BJ (cell line): ENCODE measurements at regions of chr9 and their contacts with region 1.

Region 1: GRCh38 chr9:22008736-22009562 is at the start of gene CDKN2B:
- DNase-seq: peak; percentile 87
- H3K4me3 ChIP-seq: peak within 1 kb of the TSS; percentile 94
- H3K27me3 ChIP-seq: no peaks in the 10 kb centered on the region
- CTCF ChIP-seq: peak; percentile 65
- polyA plus RNA-seq, gene CDKN2B: 4.3 and 5.2 TPM in 2 replicates

Region 2: DNA sequence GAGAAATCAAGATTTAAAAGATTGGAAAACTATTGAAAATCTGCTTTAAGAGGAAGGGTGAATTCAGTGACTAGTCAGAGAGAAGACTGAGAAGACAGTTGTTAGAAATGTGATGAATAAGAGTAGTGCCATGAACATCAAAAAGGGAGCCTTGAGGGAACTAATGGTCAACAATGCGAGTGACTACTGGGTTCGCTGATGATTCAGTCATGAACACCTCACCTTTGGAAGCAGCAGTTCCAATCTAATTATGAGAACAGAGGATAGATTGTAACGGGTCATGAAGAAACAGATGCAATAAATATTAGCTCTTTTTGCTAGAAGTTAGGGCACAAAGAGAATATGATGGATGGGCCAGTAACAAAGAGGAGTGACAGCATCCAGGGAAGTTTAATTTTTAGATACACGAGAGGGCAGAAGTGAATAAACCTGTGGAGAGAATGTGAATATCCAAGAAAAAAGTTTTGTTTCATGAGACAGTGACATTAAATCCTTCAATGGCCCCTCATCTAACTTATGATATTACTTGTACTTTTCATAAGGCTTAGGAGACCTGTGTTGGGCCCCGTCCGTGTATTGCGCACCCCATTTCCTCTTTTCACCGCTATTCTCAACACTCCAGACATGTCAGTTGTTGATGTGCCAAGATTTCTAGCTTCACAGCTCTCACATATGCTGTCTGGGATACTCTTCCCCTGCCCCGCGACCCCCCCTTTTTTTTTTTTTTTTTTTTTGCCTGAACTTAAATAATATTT is 503.3 kb before region 1 on chr9:
- CTCF ChIA-PET with region 1: no interaction called
- POLR2A ChIA-PET with region 1: no interaction called
- DNase-seq: no peak
- H3K4me3 ChIP-seq: no peak overlapping the region
- H3K27me3 ChIP-seq: no peaks in the 10 kb centered on the region
- CTCF ChIP-seq: no peak

Region 3: DNA sequence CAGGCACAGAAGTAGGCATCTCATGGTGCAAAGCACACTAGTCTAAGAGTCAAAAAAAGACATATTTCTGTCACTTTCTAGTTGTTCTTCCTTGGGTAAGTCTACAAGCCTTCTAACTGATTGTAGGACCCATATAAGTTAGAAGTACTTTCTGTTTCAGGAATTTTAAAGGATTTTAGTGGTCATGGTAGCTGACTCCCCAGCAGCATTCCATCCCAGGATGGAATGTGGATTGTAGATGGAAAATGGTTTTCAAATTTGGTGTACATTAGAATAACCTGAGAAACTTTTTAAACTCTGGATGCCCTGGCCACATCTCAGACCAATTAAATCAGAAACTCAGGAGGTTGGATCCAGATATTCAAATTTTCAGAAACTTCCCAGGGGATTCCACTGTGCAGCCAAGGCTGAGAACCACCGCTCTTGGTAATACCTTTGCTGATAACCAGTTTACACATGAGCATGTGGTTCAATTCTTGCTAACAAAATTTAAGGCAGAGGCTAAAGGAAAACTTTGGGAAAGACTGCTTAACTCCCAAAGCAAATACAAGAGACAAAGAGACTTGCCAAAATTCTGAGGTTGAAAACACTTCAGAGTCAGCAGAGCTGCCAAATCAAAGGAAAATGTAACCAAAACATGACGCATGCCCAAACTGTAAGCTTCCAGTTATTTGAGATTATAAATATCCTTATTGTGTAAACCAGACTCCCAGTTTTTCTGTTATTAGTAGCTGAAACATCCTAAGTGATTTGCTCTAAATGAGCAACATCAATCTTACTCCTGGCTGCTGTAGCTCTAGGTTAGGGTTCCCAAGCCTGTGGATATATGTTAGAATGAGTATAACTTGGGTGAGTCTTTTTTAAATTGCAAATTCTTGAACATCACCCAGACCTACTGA is 351.9 kb before region 1 on chr9:
- CTCF ChIA-PET with region 1: no interaction called
- POLR2A ChIA-PET with region 1: no interaction called
- DNase-seq: no peak
- H3K4me3 ChIP-seq: no peak overlapping the region
- H3K27me3 ChIP-seq: no peaks in the 10 kb centered on the region
- CTCF ChIP-seq: no peak

Region 4: DNA sequence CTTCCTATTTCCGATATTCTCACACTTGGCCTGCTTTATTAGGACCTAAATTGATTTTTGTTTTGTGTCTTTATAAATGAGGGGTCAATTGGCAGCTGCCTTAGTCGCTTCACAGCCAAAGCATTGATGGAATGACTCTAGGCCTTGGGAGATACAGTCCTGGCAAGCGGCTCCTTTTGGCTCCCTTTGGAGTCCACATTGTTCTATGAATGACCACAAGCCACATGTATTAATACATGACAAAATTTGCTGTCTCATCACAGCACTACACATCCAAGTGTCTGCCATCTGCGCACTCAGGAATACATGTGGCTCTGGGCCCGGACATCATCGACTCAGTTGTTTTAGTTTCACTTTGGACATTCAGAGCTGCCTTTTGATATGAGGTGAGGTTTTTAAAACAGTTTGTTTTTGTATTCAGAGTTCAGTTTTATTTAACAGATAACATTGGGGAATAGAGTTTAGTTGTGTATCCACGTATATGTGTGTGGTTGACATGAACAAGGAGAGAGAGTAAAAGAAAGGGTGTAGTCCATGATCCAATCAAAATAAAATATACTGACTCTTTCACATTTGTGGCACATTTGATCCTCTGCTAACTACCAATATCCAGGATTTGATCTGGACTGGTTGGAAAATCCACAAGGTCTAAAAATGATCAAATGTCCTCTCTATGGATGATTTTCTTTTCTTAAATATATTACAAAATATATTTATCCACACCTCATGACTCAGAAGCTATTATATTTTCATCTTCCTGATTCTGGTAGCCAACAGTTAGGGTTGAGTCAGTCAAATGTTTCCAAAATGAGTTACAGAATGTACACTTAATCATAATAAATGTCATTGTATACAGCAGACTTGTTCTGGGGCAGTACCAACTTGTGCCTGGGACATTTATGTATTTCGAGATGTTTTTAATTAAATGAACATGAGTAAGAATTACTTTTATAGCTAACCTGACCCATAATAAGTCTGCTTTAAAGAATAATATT is 320.5 kb before region 1 on chr9:
- CTCF ChIA-PET with region 1: no interaction called
- POLR2A ChIA-PET with region 1: no interaction called
- DNase-seq: no peak
- H3K4me3 ChIP-seq: no peak overlapping the region
- H3K27me3 ChIP-seq: no peaks in the 10 kb centered on the region
- CTCF ChIP-seq: no peak

Region 5: DNA sequence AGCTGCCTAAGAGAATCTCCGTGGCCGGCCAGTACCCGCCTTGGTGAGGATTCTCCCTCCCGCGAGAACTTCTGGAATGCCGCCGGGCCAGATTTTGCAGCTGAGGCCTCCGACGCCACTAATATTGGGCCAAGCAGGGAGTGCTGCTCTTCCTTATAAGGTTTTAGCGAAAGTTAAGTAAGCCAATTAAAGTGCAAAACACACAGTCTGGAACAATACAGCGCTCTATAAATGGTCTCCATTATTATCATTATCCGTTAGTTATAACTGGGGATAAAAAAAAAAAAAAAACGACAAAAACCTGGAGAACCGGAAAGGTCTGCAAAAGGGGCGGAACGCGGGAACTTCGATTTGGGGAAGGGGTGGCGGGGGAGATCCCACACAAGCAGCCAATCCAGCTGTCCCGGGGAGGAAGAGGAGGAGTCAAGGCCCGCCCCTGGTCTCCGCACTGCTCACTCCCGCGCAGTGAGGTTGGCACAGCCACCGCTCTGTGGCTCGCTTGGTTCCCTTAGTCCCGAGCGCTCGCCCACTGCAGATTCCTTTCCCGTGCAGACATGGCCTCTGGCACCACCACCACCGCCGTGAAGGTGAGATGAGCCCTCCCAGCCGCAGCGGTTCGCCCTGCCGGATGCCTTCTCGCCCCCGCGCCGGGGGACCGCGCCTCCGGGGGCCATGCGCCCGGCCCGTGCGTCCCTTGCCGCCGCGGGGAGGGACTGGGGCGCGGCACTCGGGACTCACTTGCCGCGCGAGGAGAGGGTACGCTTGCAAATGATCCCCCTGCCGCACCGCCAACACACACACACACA is 206.6 kb before region 1 on chr9 and contains the start of gene MTAP:
- CTCF ChIA-PET with region 1: interaction called, 18 read pairs
- POLR2A ChIA-PET with region 1: no interaction called
- DNase-seq: peak; percentile 70
- H3K4me3 ChIP-seq: peak within 1 kb of the TSS; percentile 77
- H3K27me3 ChIP-seq: no peaks in the 10 kb centered on the region
- CTCF ChIP-seq: no peak
- polyA plus RNA-seq, gene MTAP: 14.2 and 18.2 TPM in 2 replicates

Region 6: GRCh38 chr9:21968331-21969010 is 40.5 kb before region 1 on chr9:
- CTCF ChIA-PET with region 1: interaction called, 25 read pairs
- POLR2A ChIA-PET with region 1: no interaction called
- DNase-seq: no peak
- H3K4me3 ChIP-seq: no peak overlapping the region
- H3K27me3 ChIP-seq: peaks cover 45% of the 10 kb centered on the region
- CTCF ChIP-seq: 0 out of 2 replicates have a peak, but pooled peaks have one; percentile 5

Region 7: DNA sequence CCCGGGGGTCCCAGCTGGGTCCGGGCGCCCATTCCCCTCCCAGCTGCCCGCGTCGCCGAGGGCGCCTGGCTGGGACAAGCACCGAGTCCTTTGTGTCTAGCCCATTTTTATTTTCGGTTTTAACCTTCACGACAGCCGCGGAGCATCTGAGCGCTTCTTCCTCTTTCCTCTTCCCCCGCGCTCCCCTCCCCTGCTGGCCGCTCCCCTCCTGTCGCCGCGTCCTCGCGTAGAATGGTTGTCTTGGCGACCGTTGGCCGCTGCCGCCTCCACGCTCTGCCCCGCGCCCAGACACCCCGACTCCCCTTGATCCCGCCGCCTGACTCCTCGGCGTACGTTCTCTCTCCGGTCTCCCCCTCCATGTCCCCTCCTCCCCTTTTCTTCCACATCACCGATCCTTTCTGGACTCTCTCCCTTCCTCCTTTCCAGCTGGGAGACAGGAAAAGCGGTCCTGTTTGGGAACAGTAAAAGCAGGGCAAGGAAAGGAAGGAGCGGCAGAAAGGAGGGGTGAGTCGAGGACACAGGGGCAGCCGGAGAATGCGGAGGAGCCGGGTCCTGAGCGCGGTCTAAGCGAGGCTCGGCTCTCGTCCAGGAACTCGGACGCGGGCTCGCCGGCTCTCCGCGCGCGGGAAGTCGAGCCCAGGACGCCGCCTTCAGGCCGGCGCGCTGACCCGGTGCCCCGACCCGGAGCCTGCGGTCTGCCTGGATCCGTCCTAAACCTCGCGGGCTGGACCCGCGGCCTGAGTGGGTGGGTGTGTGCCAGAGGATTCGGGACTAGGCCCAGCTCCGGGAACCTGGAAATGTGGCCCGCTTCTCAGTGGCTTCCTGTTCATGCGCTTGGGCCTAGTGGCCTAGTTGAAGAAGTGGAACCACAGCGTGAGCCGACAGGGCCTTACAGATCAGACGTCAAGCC is 13.5 kb before region 1 on chr9:
- CTCF ChIA-PET with region 1: interaction called, 40 read pairs
- POLR2A ChIA-PET with region 1: interaction called, 4 read pairs
- DNase-seq: no peak
- H3K4me3 ChIP-seq: peak overlapping the region; percentile 86
- H3K27me3 ChIP-seq: no peaks in the 10 kb centered on the region
- CTCF ChIP-seq: peak; percentile 37; the same call in 1 of the 2 replicates

Region 8: DNA sequence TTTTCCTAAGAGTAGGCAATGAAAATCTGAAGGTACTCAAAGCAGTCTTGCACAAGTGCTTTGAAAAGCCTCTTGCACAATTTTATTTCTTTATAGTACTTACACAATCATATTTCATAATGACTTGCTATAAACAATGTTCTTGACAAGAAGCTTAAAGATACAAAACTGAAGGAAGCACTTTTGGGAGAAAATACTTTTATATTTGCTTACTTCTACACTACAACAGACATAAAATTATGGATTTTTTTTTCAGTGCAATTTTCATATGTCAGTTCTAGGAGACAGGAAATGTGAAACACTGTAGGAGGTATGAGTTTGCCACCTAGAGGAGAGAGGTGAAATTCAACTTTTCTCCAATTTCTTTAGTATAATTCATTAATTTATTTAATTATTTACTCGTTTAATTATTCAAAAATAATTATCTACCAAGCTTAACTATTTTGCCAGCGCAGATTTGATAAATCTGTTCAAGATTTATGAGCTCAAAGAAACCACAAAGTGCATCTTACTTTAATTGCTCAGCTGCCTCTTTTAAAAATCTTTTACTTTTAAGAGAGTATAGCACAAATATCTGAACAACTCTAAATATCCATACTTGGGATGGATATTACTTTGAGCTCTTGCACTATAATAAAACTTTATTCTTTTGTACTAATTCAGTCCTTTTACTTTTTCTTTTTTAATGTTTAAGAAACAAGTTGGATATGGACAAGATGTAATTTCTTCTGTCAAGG is 29.2 kb after region 1 on chr9:
- CTCF ChIA-PET with region 1: interaction called, 46 read pairs
- POLR2A ChIA-PET with region 1: interaction called, 3 read pairs
- DNase-seq: no peak
- H3K4me3 ChIP-seq: no peak overlapping the region
- H3K27me3 ChIP-seq: peaks cover 1% of the 10 kb centered on the region; the same call in 1 of the 2 replicates
- CTCF ChIP-seq: peak; percentile 41

Region 9: GRCh38 chr9:22203371-22204138 is 194.6 kb after region 1 on chr9:
- CTCF ChIA-PET with region 1: no interaction called
- POLR2A ChIA-PET with region 1: no interaction called
- DNase-seq: no peak
- H3K4me3 ChIP-seq: no peak overlapping the region
- H3K27me3 ChIP-seq: peaks cover 3% of the 10 kb centered on the region
- CTCF ChIP-seq: no peak

Region 10: DNA sequence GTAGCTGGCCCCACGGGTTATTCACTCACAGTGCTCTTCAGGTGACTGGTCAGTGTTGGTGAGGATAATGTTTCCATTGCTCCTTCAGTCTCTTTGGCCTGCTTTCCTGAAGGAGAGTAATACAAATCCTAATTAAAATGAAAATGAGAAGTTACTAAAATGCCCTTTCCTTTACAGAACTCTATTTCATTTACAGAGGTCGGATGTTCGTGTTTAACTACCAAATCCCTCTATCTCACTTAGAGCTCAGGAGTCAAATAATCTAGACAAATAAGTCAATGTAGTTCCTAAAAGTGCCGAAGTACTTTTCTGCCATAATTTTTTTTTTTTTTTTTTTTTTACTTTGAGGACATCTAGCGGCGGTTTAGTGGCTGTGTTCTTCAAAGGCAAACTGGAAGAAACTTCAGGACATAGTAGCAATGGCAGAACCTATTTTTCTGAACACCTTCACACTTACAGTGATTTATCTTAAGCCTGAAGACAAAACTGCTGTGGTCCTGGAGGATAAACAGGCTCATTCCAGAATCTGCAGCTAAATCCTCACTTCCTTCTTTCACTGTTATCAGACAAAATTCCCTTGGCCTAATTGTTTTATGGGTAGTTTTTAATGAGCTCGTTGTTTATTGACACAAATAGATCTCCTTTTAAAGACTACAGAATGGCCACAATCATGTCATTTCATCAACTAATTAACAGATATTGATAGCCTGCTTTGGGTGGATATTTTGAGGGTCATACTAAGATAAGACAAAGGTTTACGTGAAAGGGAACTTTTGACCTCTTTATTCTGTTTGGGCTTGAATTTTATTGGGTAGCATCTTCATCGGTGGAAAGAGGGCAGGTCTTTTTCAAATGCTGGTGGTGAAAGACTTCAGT is 230.1 kb after region 1 on chr9:
- CTCF ChIA-PET with region 1: interaction called, 28 read pairs
- POLR2A ChIA-PET with region 1: no interaction called
- DNase-seq: no peak
- H3K4me3 ChIP-seq: no peak overlapping the region
- H3K27me3 ChIP-seq: no peaks in the 10 kb centered on the region
- CTCF ChIP-seq: peak; percentile 63